Thyroid gland (tissue), 4 donors: ENCODE measurements at regions of chr12 and their contacts with region 1.

Region 1: GRCh38 chr12:6278439-6279255 is 31.8 kb upstream of the PLEKHG6 start:
- DNase-seq: peak; percentile 88 to 89
- H3K4me3 ChIP-seq: peak overlapping the region in 2 of 3 donors; percentile 10 to 35
- H3K27ac ChIP-seq: peak overlapping the region; percentile 92 to 100 (median 99)
- H3K4me1 ChIP-seq: peaks cover 27 to 51% of the 10 kb centered on the region in 2 donors
- H3K27me3 ChIP-seq: no peaks in the 10 kb centered on the region
- CTCF ChIP-seq: peak; percentile 36 to 100 (median 98)
- POLR2A ChIP-seq: peak in 1 of 2 donors; percentile 79

Region 2: DNA sequence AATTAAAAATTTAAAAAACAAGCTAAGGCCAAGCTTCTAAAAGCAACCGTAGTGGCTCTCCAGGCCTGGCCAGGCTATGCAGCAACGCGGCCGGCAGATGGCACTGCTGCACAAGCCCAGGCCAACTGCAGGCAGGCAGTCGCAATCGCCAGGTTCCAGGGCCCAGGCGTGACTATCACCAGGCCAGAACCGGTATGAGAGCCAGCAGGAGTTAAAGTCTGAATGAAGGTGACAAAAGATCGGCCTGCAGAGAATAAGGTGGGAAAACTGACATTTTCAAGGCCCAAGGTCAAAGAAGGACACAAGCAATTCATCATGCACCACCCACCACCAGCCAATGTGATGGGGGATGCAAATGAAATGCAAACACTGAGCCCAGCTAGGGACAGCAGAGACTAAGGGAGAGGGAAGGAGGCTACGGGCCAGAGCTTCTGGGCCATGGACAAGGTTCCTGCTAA is 290.0 kb before region 1 on chr12:
- intact Hi-C with region 1: loop called (anchors 5 kb)
- DNase-seq: peak; percentile 79 to 83
- H3K4me3 ChIP-seq: no peak overlapping the region
- H3K27ac ChIP-seq: no peak overlapping the region
- H3K4me1 ChIP-seq: no peaks in the 10 kb centered on the region
- H3K27me3 ChIP-seq: no peaks in the 10 kb centered on the region
- CTCF ChIP-seq: peak; percentile 82 to 98 (median 92)
- POLR2A ChIP-seq: no peak

Region 3: GRCh38 chr12:6062757-6063735 is 215.6 kb before region 1 on chr12:
- intact Hi-C with region 1: loop called (anchors 5 kb)
- DNase-seq: peak; percentile 42 to 49
- H3K4me3 ChIP-seq: no peak overlapping the region
- H3K27ac ChIP-seq: no peak overlapping the region
- H3K4me1 ChIP-seq: peaks cover 0 to 10% of the 10 kb centered on the region in 2 donors
- H3K27me3 ChIP-seq: no peaks in the 10 kb centered on the region
- CTCF ChIP-seq: peak; percentile 65 to 91 (median 86)
- POLR2A ChIP-seq: no peak

Region 4: GRCh38 chr12:6167327-6168259 is 111.1 kb before region 1 on chr12:
- intact Hi-C with region 1: no loop called
- DNase-seq: no peak
- H3K4me3 ChIP-seq: no peak overlapping the region
- H3K27ac ChIP-seq: peak overlapping the region; percentile 42 to 79 (median 57)
- H3K4me1 ChIP-seq: peaks cover 0 to 16% of the 10 kb centered on the region in 2 donors
- H3K27me3 ChIP-seq: no peaks in the 10 kb centered on the region
- CTCF ChIP-seq: no peak
- POLR2A ChIP-seq: no peak

Region 5: GRCh38 chr12:6199531-6200265 is 78.9 kb before region 1 on chr12:
- intact Hi-C with region 1: loop called (anchors 2 kb)
- DNase-seq: peak; percentile 65 to 68
- H3K4me3 ChIP-seq: peak overlapping the region; percentile 8 to 99 (median 43)
- H3K27ac ChIP-seq: peak overlapping the region; percentile 98 to 99 (median 98)
- H3K4me1 ChIP-seq: peaks cover 44 to 56% of the 10 kb centered on the region in 2 donors
- H3K27me3 ChIP-seq: no peaks in the 10 kb centered on the region
- CTCF ChIP-seq: no peak
- POLR2A ChIP-seq: peak in 1 of 2 donors; percentile 38

Region 6: GRCh38 chr12:6230321-6231110 is 48.1 kb before region 1 on chr12:
- intact Hi-C with region 1: loop called (anchors 5 kb)
- DNase-seq: peak; percentile 65 to 68
- H3K4me3 ChIP-seq: no peak overlapping the region
- H3K27ac ChIP-seq: peak overlapping the region; percentile 92 to 98 (median 92)
- H3K4me1 ChIP-seq: peaks cover 75 to 99% of the 10 kb centered on the region in 2 donors
- H3K27me3 ChIP-seq: no peaks in the 10 kb centered on the region
- CTCF ChIP-seq: no peak
- POLR2A ChIP-seq: peak in 1 of 2 donors; percentile 37